ENCODE measurements at regions of chr18 and their contacts with region 1.

Region 1: GRCh38 chr18:77132371-77133050 is at the start of gene MBP:
- DNase-seq: peak; percentile 75
- ATAC-seq: peak; percentile 66
- H3K4me3 ChIP-seq: peak within 1 kb of the TSS; percentile 98
- H3K27ac ChIP-seq: peak within 1 kb of the TSS; percentile 96
- H3K4me1 ChIP-seq: peaks cover 41% of the 10 kb centered on the region
- H3K27me3 ChIP-seq: no peaks in the 10 kb centered on the region
- CTCF ChIP-seq: no peak
- total RNA-seq, gene MBP: 34.2 and 47.4 TPM in 2 replicates

Region 2: DNA sequence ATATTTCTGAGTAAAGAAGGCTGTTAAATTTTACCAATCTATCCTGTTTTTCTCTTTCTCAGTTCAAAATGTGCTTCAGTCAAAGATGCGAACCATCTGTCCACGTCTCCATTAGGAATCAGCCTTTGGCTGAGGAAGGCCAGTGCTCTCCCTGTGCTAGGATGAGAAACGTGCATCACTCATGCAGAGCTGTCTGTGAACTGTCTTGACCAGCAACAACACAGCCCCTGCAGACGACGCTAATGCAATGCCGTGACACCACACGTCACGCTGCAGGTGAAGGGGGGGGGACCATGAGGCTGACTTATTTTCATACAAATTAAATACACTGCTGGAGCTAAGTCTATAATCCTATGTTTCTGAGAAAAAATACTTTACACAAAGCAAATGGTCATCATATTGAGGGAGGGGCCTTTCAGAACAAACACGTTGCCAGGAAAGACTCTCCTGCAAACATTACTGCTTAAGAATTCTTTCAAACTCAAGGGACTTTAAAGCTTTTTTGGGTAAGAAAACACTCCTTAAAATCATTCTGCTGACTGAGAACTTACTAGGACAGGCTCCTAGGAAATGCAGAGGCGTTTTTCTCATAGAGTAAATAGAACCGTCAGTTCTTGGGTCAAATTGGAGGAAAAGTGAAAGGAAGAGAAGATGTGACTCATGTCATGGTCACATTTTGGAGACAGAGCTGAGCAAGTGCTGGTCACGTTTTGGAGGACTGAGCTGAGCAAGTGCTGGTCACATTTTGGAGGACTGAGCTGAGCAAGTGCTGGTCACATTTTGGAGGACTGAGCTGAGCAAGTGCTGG is 96.9 kb before region 1 on chr18:
- CTCF ChIA-PET with region 1: no interaction called
- POLR2A ChIA-PET with region 1: interaction called, 29 read pairs
- intact Hi-C with region 1: no loop called
- DNase-seq: peak; percentile 83
- ATAC-seq: peak; percentile 88
- H3K4me3 ChIP-seq: peak overlapping the region; percentile 52
- H3K27ac ChIP-seq: peak overlapping the region; percentile 95
- H3K4me1 ChIP-seq: peaks cover 24% of the 10 kb centered on the region
- H3K27me3 ChIP-seq: no peaks in the 10 kb centered on the region
- CTCF ChIP-seq: no peak

Region 3: GRCh38 chr18:77067291-77068061 is 65.0 kb before region 1 on chr18:
- CTCF ChIA-PET with region 1: no interaction called
- POLR2A ChIA-PET with region 1: interaction called, 3 read pairs
- intact Hi-C with region 1: loop called (anchors 1 kb)
- DNase-seq: peak; percentile 86
- ATAC-seq: peak; percentile 72
- H3K4me3 ChIP-seq: peak overlapping the region; percentile 9; the same call in 1 of the 2 replicates
- H3K27ac ChIP-seq: peak overlapping the region; percentile 99
- H3K4me1 ChIP-seq: peaks cover 94% of the 10 kb centered on the region
- H3K27me3 ChIP-seq: no peaks in the 10 kb centered on the region
- CTCF ChIP-seq: peak; percentile 37; the same call in 1 of the 2 replicates

Region 4: DNA sequence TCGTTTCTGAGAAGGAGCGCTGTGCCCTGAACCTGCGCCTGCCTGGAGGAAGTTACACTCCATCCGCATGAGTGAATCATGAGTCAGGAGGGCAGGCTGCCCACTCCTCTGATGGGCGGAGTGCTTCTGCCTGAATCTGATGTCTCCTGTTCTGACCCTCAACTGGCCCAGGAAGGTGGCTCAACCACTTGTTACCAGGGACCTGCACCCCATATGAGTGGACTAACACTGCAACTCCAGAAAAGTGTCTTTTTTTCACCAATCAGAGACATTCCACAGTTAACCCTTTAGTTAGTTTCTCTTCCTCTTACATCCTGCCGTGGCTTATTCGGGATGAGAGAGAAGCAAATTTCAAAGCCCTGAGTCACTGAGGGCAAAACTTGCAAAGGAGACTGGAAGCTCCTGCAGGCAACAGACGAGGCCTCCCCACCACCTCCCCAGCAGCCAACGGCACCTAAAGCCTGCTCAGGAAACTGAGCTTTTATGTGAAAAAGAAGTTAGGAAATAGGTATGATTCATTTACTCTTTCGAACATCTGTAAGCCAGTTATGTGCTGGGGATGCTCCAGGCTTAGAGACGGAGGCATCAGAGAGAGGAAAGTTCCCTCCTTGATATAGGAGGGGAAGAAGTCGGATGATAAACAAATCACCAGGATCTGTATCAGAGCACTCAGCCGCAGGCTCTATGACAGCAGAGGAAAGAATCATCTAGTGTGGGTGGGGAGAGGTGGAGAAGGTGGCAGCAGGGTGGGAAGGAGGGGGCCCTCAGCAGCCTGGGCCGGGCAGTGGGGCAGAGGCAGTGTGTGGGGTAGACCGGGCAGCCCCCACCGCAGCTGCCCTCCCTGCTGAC is 30.9 kb before region 1 on chr18:
- CTCF ChIA-PET with region 1: interaction called, 7 read pairs
- POLR2A ChIA-PET with region 1: interaction called, 4 read pairs
- intact Hi-C with region 1: loop called (anchors 1 kb)
- DNase-seq: peak; percentile 95
- ATAC-seq: peak; percentile 83
- H3K4me3 ChIP-seq: peak overlapping the region; percentile 46; the same call in 1 of the 2 replicates
- H3K27ac ChIP-seq: peak overlapping the region; percentile 99
- H3K4me1 ChIP-seq: peaks cover 46% of the 10 kb centered on the region
- H3K27me3 ChIP-seq: no peaks in the 10 kb centered on the region
- CTCF ChIP-seq: no peak